ENCODE measurements at regions of chr14 and their contacts with region 1.

Region 1: DNA sequence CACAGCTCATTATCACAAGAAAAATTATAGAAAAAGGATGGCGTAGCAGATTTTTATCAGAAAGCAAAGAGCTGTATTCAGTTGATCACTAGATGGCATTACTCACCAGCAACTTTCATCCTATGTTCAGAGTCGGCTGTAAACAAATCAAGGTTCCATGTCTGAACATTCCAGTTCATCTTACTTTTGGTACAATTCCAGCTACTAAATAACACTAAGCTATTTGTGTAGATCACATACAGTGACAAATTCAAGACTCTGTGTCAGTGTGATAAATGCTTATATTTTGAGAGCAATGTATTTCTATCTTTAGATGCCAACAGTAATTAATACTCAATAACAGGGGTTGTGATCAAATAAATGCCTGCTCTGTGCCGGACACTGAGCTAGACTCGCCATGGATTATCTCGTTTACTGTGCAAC is 30.1 kb downstream of the NRDE2 start:
- DNase-seq: peak in 5 of 42 donors; percentile 27 to 64 (median 50)

Region 2: DNA sequence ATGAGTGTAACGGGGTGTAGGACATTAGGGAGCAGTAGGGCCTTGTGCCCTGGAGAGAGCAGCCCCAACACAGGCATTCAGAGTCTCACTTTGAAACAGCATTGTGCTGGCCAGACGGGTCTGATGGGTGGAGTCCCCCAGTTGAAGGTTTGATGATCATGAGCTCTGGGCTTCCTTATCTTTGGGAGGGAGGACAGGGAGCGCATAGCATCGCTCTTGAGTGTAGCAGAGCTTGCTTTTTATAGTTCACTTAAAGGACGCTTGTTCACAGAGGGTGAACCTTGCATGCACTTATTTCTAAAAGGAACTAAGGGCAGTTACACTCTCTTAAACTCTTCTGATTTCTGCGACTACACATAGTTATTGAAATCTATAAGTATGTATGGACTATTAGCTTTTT is 229.3 kb before region 1 on chr14:
- intact Hi-C with region 1: no loop called
- DNase-seq: no peak

Region 3: GRCh38 chr14:90697577-90698206 is 396.0 kb after region 1 on chr14:
- intact Hi-C with region 1: loop called (anchors 10 kb)
- DNase-seq: peak; percentile 81 to 97 (median 91)

Region 4: DNA sequence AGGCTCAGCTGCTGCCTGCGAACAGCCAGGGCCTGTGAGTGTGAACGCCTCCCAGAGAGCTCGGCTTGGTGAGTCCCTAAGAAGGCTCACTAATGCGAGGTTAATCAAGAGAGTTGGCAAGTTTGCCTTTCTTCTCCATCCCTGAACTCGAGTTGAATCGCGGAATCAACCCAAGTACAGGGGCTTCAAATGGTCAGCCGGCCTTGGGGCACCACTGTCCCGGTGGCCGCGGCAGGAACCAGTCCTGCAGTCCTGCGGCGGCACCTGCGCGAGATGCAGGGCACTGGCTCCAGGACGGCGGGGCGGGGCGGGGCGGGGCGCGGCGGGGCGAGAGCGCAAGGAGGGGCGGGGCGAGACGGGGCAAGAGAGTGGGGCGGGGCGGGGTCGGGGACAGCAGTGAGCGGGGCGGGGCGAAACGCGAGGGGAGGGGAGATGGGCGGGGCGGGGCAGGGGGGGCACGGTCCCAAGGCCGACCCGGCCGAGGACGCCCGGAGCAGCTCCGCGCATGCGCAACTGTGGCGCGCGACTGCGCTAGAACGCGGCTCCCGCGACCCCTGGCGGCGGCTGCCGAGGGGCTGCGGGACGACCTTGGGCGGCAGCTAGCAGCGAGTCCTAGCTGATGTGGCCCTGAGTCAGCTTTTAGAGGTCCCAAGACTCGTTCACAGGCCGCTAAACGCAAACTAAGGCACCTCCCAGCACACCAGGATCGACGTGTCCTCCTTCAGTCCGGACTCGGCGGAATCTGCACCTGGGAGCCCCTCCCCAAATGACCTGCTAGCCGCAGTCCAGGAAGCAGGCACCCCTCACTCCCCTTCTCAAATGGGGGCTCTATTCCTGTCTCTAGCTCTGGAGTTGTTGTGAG is 456.6 kb after region 1 on chr14:
- intact Hi-C with region 1: loop called (anchors 10 kb)
- DNase-seq: peak; percentile 63 to 96 (median 91)